B cell (primary cell): ENCODE measurements at regions of chr13 and their contacts with region 1.

Region 1: DNA sequence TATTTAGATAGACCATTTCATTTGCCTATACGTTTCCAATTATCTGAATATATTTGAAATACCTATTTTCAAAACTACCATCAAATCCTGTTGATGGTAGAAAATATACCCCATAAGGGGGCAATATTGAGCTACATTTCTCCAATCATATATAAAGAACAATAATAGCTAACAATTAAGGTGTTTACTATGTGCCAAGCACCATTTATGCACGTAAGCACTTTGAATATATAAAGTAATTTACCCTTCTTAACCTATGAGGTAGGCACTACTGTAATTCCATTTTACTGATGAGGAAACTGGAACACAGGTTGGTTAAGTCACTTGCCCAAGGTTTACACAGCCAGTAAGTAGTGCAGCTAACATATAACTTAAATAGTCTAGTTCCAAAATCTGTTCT is 79.2 kb downstream of the UBL3 start:
- DNase-seq: peak; percentile 69
- ATAC-seq: no peak
- H3K4me3 ChIP-seq: no peak overlapping the region
- H3K4me3 Mint-ChIP-seq: no peak overlapping the region
- H3K27ac ChIP-seq: no peak overlapping the region
- H3K27ac Mint-ChIP-seq: no peak overlapping the region
- H3K4me1 ChIP-seq: no peaks in the 10 kb centered on the region
- H3K4me1 Mint-ChIP-seq: no peaks in the 10 kb centered on the region
- H3K27me3 ChIP-seq: no peaks in the 10 kb centered on the region
- H3K27me3 Mint-ChIP-seq: no peaks in the 10 kb centered on the region
- CTCF ChIP-seq: peak; percentile 82

Region 2: DNA sequence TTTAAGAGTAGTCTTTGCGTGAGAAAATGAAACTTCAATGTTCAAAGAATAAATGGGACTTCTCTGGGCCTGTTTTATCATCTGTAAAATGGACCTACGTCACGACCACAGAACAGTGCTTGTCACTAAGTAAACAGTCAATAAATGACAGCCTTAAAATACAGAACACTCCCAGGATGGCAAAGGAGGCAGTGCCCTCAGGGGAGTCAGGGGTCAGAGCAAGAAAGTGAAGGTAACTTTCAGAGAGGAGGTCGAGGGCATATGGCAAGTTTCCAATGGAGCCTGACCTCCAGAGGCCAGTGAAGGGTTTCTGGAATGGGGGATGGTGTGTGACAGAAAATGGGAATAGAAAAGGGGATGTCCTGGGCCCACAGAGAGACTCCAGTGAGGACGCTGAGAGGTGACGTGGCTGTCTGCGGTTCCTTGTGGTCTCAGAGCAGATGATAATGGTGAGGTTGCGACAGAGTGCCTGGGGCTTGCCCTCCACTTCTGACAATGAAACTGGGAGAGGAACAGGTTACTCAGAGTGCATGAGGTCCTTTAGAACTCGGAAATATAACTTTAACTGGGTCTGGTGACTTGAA is 12.6 kb before region 1 on chr13:
- CTCF ChIA-PET with region 1: interaction called, 15 read pairs
- POLR2A ChIA-PET with region 1: no interaction called
- intact Hi-C with region 1: no loop called
- DNase-seq: peak; percentile 73
- ATAC-seq: peak; percentile 76
- H3K4me3 ChIP-seq: no peak overlapping the region
- H3K4me3 Mint-ChIP-seq: peak overlapping the region; percentile 75
- H3K27ac ChIP-seq: peak overlapping the region; percentile 1 to 68
- H3K27ac Mint-ChIP-seq: peak overlapping the region; percentile 80
- H3K4me1 ChIP-seq: peaks cover 9 to 24% of the 10 kb centered on the region in 2 donors
- H3K4me1 Mint-ChIP-seq: peaks cover 30% of the 10 kb centered on the region
- H3K27me3 ChIP-seq: no peaks in the 10 kb centered on the region
- H3K27me3 Mint-ChIP-seq: peaks cover 1% of the 10 kb centered on the region
- CTCF ChIP-seq: no peak

Region 3: GRCh38 chr13:29817604-29818378 is 46.5 kb after region 1 on chr13:
- CTCF ChIA-PET with region 1: interaction called, 3 read pairs
- POLR2A ChIA-PET with region 1: no interaction called
- intact Hi-C with region 1: loop called (anchors 5 kb)
- DNase-seq: peak; percentile 60
- ATAC-seq: peak; percentile 85
- H3K4me3 ChIP-seq: peak overlapping the region in 1 of 5 experiments; percentile 48
- H3K4me3 Mint-ChIP-seq: peak overlapping the region; percentile 77
- H3K27ac ChIP-seq: peak overlapping the region; percentile 59 to 65
- H3K27ac Mint-ChIP-seq: peak overlapping the region; percentile 51
- H3K4me1 ChIP-seq: peaks cover 20 to 34% of the 10 kb centered on the region in 2 donors
- H3K4me1 Mint-ChIP-seq: peaks cover 63% of the 10 kb centered on the region
- H3K27me3 ChIP-seq: no peaks in the 10 kb centered on the region
- H3K27me3 Mint-ChIP-seq: no peaks in the 10 kb centered on the region
- CTCF ChIP-seq: no peak

Region 4: DNA sequence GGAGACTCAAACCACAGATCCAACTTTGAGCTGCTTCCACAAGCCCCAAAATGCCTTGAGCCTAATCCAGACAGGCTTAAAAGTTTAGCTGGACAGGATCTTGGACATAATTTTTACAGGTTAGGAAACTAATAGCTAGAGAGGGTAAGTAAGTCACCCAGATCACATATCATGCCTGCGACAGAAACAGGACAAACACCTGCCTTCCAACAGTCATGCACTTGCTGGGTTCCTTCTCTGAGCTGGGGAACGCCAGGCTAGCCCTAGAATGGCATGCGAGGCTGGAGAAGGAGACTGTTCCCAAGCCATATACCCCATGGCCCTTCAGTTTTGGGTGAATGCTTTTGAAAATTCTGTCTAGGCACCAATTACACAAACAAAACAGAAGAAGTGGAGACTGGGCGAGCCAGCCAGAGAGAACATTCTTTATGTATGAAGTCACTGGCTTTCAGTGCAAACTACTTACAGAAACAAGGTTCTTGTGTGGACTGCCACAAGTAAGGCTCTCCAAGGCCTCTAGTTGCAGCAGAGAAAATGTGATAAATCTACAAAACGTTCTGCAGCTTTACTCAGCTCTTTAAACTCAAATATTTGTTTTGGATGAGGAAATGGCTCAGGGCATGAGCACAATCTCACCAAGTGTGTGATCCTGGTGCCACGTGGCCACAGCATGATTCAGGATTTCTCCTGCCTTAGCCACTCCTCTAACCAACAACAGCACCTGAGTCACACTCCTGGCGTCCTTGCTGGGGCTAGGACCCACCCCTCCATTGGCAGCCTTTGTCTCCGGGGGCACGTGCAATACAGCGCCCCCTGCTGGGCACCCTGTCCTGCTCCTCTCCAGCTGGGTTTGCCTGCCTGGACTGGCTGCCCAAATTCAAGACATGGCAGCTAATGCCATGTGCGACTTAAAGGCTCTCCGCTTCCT is 152.6 kb after region 1 on chr13:
- CTCF ChIA-PET with region 1: interaction called, 246 read pairs
- POLR2A ChIA-PET with region 1: no interaction called
- intact Hi-C with region 1: loop called (anchors 1 kb)
- DNase-seq: peak; percentile 69
- ATAC-seq: peak; percentile 66
- H3K4me3 ChIP-seq: no peak overlapping the region
- H3K4me3 Mint-ChIP-seq: no peak overlapping the region
- H3K27ac ChIP-seq: no peak overlapping the region
- H3K27ac Mint-ChIP-seq: no peak overlapping the region
- H3K4me1 ChIP-seq: peaks cover 0 to 4% of the 10 kb centered on the region in 2 donors
- H3K4me1 Mint-ChIP-seq: no peaks in the 10 kb centered on the region
- H3K27me3 ChIP-seq: peaks cover 0 to 7% (median 0%) of the 10 kb centered on the region in 4 experiments
- H3K27me3 Mint-ChIP-seq: peaks cover 13% of the 10 kb centered on the region
- CTCF ChIP-seq: peak; percentile 89

Region 5: DNA sequence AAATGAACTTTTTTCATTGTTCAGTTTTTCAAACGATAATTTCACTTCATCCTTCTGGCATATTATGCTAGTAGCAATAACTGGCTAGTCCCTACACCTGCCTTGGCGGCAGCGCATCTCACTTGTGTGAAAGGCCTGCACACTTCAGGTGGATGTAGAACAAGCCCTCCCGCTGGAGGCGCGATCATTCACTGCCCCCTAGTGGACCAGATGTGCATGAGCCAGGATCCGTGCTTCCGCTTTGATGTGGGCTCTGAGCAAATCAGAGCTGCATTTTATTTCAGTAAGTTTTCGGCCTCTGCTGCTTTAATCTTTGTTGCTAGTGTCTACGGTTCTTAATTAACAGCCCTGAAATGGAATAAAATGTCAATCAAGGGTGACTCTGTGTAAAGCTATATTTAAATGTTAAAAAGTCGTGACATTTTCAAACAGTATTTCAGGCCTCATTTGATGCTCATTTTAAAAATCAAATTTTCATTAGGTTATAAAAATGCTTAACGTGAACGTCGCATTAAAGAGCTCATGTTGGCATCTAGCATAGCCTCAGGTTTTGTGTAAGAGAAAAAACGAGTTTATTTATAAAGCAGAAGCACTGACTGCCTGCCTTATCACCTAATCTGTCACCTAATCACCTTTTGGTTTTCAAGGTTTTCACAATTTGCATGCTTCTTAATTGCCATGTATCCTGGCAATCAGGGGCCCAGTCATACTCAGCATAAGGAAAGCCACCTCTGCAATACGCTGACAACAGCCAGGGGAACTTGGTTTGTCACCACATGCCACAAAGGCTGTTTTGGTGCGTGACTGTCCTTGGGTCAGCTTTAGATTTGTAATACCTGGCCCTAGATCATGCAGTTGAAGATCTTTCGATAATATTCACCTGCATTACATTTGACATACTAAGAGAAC is 1273.4 kb after region 1 on chr13:
- CTCF ChIA-PET with region 1: no interaction called
- POLR2A ChIA-PET with region 1: no interaction called
- intact Hi-C with region 1: loop called (anchors 5 kb)
- DNase-seq: peak; percentile 80
- ATAC-seq: peak; percentile 91
- H3K4me3 ChIP-seq: no peak overlapping the region
- H3K4me3 Mint-ChIP-seq: peak overlapping the region; percentile 38
- H3K27ac ChIP-seq: no peak overlapping the region
- H3K27ac Mint-ChIP-seq: no peak overlapping the region
- H3K4me1 ChIP-seq: peaks cover 18 to 20% of the 10 kb centered on the region in 2 donors
- H3K4me1 Mint-ChIP-seq: peaks cover 12% of the 10 kb centered on the region
- H3K27me3 ChIP-seq: peaks cover 0 to 51% (median 30%) of the 10 kb centered on the region in 4 experiments
- H3K27me3 Mint-ChIP-seq: peaks cover 41% of the 10 kb centered on the region
- CTCF ChIP-seq: peak; percentile 95